ENCODE measurements at regions of chr4 and their contacts with region 1.

Region 1: DNA sequence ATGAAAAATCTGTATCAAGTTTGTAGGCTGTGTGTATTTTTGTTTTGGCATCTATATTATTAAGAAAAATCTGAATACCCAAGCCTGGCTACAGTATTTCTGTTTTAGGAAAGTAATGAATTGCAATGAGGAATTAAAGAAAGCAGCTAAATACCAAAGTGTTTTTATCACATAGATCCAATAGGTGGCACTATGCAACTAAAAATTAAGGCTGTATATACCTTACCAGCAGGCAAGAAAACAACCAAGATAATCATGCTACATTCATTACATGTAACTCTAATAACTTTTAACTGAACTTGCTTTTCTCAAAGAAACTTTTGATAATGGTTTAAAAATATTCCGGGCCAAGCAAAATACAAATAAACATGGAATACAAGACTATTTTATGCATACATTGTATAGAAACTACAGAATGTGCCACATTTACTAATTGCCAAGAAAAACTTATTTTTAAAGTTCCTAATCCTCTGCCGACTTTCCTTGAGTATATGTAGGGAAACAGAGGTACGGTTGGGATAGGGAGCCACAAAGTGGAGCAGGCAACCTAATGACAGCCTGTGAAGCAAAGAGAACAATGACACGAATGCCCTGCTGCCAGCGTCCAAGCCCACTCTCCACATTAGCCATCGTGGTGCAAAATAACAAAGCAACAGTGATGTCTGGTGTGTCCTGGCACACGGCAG is 63.7 kb downstream of the SEC24D start:
- DNase-seq: no peak

Region 2: DNA sequence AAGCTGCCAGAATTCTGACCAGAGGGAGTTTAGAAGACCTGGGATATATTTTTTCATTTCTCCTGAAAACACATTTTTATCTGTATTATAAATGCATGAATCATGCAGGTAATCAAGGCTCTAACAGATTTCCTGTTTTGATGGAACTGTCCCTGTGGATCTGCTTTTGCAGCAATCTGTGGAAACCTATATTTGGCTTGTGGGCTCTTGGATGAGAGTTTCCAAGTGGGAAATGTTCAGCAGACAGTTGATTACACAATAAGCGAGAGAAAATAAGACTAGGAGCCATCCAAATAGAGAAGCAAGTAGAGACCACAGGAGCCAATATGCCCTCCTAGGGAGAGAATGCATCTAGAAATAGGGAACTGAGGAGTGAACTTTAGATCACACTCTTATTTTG is 633.0 kb before region 1 on chr4:
- intact Hi-C with region 1: no loop called
- DNase-seq: no peak

Region 3: DNA sequence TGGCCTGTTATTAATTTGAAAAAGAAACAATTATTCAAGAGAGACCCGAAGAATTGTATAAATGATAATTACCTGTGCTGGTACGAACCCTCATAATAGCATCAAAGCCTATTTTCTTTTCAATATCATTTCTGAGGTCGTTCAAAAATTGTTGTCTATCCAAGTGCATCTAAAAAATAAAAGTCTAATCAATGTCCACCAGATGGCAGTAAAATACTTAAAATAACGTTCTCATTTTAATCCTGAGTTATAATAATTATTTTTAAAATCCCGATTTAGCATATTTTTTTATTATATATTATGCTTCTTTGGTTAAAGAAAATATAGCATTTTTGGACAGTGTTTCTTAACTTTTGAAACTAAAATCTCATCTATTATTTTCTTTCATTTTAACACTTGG is 31.4 kb before region 1 on chr4:
- intact Hi-C with region 1: loop called in 1 of 2 experiments (anchors 2 kb)
- DNase-seq: no peak

Region 4: GRCh38 chr4:118888666-118889311 is 116.6 kb after region 1 on chr4 and contains the start of gene SYNPO2:
- intact Hi-C with region 1: loop called (anchors 5 to 10 kb)
- DNase-seq: peak; percentile 95
- total RNA-seq, gene SYNPO2: 960 to 1,079 TPM

Region 5: GRCh38 chr4:118898684-118899138 is 126.5 kb after region 1 on chr4:
- intact Hi-C with region 1: loop called in 1 of 2 experiments (anchors 10 kb)
- DNase-seq: peak; percentile 79

Region 6: GRCh38 chr4:118968005-118968404 is 195.8 kb after region 1 on chr4:
- intact Hi-C with region 1: loop called (anchors 5 to 10 kb)
- DNase-seq: no peak

Region 7: GRCh38 chr4:118974758-118975157 is 202.5 kb after region 1 on chr4:
- intact Hi-C with region 1: loop called (anchors 5 to 10 kb)
- DNase-seq: no peak